Prostate gland (tissue), 2 donors: ENCODE measurements at regions of chr11 and their contacts with region 1.

Region 1: GRCh38 chr11:26849036-26849435 is 127.2 kb upstream of the SLC5A12 start:
- DNase-seq: peak; percentile 43
- H3K4me3 ChIP-seq: no peak overlapping the region
- H3K27ac ChIP-seq: peak overlapping the region; percentile 56 to 81
- H3K4me1 ChIP-seq: peaks cover 4% of the 10 kb centered on the region
- H3K27me3 ChIP-seq: no peaks in the 10 kb centered on the region
- CTCF ChIP-seq: no peak
- POLR2A ChIP-seq: no peak

Region 2: DNA sequence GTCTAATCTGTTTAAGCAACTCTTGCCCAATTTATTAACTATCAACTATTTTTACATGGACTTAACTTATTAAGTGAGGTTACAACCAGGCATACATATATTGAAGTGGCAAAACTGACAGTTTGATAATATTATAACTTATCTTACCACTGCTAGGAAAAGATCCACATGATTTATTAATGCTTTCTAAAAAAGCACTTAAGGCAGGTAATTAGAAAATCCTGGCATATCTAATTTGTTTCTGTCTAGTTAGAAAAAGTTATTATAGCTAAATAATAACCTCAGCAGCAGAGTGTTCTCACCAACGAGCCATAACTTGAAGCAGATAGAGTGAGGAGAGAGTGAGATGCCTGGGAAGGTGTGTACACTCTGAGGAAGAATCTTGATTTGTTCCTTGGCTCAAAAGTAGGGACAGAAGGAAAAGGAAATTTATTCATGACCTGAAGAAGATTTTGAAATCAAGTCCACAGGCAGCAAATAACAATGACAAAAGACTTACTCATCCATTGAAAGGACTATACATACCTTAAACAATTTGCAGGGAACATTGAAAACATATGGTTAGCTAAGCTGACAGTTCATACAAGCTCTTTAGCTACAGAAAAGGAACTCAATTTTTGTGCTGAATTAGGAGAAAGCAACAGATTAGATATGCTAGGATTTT is 269.9 kb before region 1 on chr11:
- intact Hi-C with region 1: no loop called
- DNase-seq: no peak
- H3K4me3 ChIP-seq: no peak overlapping the region
- H3K27ac ChIP-seq: no peak overlapping the region
- H3K4me1 ChIP-seq: no peaks in the 10 kb centered on the region
- H3K27me3 ChIP-seq: no peaks in the 10 kb centered on the region
- CTCF ChIP-seq: no peak
- POLR2A ChIP-seq: no peak

Region 3: GRCh38 chr11:26878959-26879581 is 30.0 kb after region 1 on chr11:
- intact Hi-C with region 1: no loop called
- DNase-seq: no peak
- H3K4me3 ChIP-seq: no peak overlapping the region
- H3K27ac ChIP-seq: no peak overlapping the region
- H3K4me1 ChIP-seq: no peaks in the 10 kb centered on the region
- H3K27me3 ChIP-seq: no peaks in the 10 kb centered on the region
- CTCF ChIP-seq: no peak
- POLR2A ChIP-seq: no peak

Region 4: DNA sequence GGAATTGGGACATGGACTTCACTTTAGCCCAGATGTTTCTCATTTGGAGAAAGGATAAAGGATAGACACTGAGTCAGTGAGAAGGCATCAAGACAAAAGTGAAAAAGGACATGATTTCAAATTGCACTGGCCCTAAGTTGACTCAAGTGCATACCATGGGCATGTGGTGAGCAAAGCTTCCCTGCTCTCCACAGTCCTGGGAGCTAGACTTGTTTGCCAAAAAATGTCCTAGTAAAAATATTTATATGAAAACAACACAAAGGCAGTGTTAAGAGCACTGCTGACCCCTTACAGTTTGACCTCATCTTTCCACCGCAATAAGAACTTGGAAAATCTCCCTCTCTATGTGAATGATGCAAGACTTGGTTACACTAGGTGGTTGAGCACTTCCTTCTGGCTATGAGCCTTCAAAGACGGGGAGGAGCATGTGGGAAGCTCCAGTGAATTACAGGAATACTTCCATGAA is 98.4 kb after region 1 on chr11:
- intact Hi-C with region 1: loop called (anchors 2 kb)
- DNase-seq: peak; percentile 43
- H3K4me3 ChIP-seq: no peak overlapping the region
- H3K27ac ChIP-seq: no peak overlapping the region
- H3K4me1 ChIP-seq: no peaks in the 10 kb centered on the region
- H3K27me3 ChIP-seq: no peaks in the 10 kb centered on the region
- CTCF ChIP-seq: no peak
- POLR2A ChIP-seq: no peak

Region 5: GRCh38 chr11:26993965-26994457 is 145.0 kb after region 1 on chr11 and contains the start of gene FIBIN:
- intact Hi-C with region 1: loop called (anchors 5 kb)
- DNase-seq: no peak
- H3K4me3 ChIP-seq: peak within 1 kb of the TSS; percentile 31 to 33
- H3K27ac ChIP-seq: peak within 1 kb of the TSS; percentile 36 to 54
- H3K4me1 ChIP-seq: no peaks in the 10 kb centered on the region
- H3K27me3 ChIP-seq: no peaks in the 10 kb centered on the region
- CTCF ChIP-seq: no peak
- POLR2A ChIP-seq: no peak
- total RNA-seq, gene FIBIN: 5.7 to 13.4 TPM

Region 6: GRCh38 chr11:27084518-27084917 is 235.5 kb after region 1 on chr11:
- intact Hi-C with region 1: loop called (anchors 10 kb)
- DNase-seq: no peak
- H3K4me3 ChIP-seq: no peak overlapping the region
- H3K27ac ChIP-seq: no peak overlapping the region
- H3K4me1 ChIP-seq: no peaks in the 10 kb centered on the region
- H3K27me3 ChIP-seq: no peaks in the 10 kb centered on the region
- CTCF ChIP-seq: no peak
- POLR2A ChIP-seq: no peak